Tibial artery (tissue), 4 donors: ENCODE measurements at regions of chr16 and their contacts with region 1.

Region 1: DNA sequence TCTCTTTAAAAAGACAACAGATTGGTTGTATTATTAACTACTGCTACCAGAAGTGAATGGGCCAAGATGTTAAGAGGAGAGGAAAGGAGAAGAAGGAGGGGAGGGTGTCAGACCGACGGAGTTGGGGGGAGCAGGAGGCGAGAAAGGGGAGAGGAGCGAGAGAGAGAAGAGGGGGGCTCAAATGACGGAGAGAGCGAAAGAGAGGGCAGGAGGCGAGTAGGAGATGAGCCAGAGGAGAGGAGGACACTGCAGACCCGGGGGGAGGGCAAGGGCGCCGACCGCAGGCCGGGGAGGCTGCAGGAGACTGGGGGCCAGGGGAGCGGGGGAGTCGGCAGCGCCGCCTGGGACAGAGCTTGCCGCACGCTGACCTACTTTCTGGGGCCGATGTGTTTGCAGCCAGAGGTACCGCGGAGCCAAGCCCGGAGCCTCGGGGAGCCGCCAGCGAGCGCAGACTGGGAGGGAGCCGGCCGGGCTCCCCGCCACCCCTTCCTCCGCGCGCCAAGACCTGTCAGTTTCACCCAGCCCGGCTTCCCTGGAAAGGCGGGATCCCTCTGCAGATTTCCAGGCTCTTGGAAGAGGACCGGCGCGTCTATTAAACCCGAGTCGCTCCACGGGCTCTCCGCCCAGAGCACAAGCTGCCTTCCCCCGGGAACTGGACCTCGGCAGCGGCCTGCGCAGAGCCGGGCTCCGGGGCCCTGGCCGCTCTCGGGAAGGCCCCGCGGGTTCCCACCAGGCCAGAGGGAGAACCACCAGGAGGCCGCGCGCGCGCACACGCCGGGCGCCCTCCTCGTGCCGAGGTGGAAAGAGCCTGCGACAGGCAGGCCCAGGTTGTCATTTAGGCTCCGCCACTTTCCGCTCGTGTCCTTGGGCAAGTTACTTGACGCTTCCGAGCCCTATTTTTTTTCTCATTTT is 74.6 kb downstream of the CMC2 start:
- DNase-seq: peak; percentile 62 to 79
- H3K4me3 ChIP-seq: peak overlapping the region; percentile 50 to 59
- H3K27ac ChIP-seq: peak overlapping the region; percentile 73 to 83
- H3K4me1 ChIP-seq: peaks cover 0 to 17% (median 11%) of the 10 kb centered on the region in 4 donors
- H3K27me3 ChIP-seq: no peaks in the 10 kb centered on the region
- CTCF ChIP-seq: no peak

Region 2: GRCh38 chr16:80899809-80900592 is 32.1 kb before region 1 on chr16:
- intact Hi-C with region 1: loop called (anchors 2 kb)
- DNase-seq: peak; percentile 89 to 97
- H3K4me3 ChIP-seq: peak overlapping the region; percentile 14 to 38
- H3K27ac ChIP-seq: peak overlapping the region; percentile 56 to 74
- H3K4me1 ChIP-seq: peaks cover 0 to 15% (median 11%) of the 10 kb centered on the region in 4 donors
- H3K27me3 ChIP-seq: no peaks in the 10 kb centered on the region
- CTCF ChIP-seq: no peak

Region 3: DNA sequence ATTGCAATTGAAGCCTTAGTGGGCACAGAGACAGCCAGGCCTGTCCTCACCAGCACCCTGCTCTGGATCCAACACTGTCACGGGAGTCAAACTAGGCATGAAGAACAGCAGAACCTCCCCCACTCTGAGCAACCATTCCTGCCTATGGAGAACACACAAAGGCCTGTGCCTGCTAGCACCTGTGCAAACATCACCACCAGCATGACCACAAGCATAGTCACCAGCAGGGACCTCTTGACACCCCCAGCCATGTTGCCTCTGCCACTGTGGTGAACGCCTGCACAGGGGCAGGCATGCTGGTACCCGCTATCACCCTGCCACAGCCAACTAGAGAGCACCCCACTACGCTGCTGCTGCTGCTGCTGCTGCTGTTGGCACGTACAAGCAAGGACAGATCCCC is 22.9 kb after region 1 on chr16:
- intact Hi-C with region 1: no loop called
- DNase-seq: no peak
- H3K4me3 ChIP-seq: no peak overlapping the region
- H3K27ac ChIP-seq: no peak overlapping the region
- H3K4me1 ChIP-seq: no peaks in the 10 kb centered on the region
- H3K27me3 ChIP-seq: no peaks in the 10 kb centered on the region
- CTCF ChIP-seq: no peak

Region 4: GRCh38 chr16:80997139-80997798 is 65.2 kb after region 1 on chr16:
- intact Hi-C with region 1: loop called (anchors 10 kb)
- DNase-seq: no peak
- H3K4me3 ChIP-seq: peak overlapping the region; percentile 5 to 23
- H3K27ac ChIP-seq: no peak overlapping the region
- H3K4me1 ChIP-seq: peaks cover 0 to 7% (median 0%) of the 10 kb centered on the region in 4 donors
- H3K27me3 ChIP-seq: no peaks in the 10 kb centered on the region
- CTCF ChIP-seq: no peak